OCI-LY7 (cell line): ENCODE measurements at regions of chr9 and their contacts with region 1.

Region 1: DNA sequence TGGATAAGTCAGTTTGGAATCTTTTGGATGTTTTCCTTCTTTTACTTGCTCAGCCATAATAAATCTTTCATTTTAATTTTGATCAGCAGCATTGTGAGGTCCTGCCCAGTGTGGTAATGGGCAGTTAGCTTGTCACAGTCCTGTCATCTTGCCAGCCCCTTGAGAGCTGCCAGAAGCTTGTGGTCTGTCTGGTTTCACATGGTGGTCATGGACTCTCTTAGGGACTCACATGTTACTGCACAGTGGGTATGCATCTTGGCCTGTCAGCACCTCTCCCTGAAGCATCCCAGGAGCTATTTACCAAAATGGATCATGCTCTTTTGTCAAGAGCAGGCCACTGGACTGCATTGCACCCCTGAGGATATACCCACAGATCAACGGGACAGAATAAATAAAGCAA is 60.3 kb downstream of the DAPK1 start:
- DNase-seq: no peak
- H3K4me3 ChIP-seq: no peak overlapping the region
- H3K27ac ChIP-seq: no peak overlapping the region
- H3K4me1 ChIP-seq: peaks cover 49% of the 10 kb centered on the region
- CTCF ChIP-seq: no peak

Region 2: GRCh38 chr9:87479801-87480201 is 78.2 kb before region 1 on chr9:
- CTCF ChIA-PET with region 1: no interaction called
- POLR2A ChIA-PET with region 1: interaction called, 8 read pairs
- intact Hi-C with region 1: loop called (anchors 5 kb)
- DNase-seq: peak; percentile 77
- H3K4me3 ChIP-seq: no peak overlapping the region
- H3K27ac ChIP-seq: peak overlapping the region; percentile 54
- H3K4me1 ChIP-seq: peaks cover 11% of the 10 kb centered on the region
- CTCF ChIP-seq: no peak

Region 3: GRCh38 chr9:87569518-87569917 is 11.5 kb after region 1 on chr9:
- CTCF ChIA-PET with region 1: interaction called, 3 read pairs
- POLR2A ChIA-PET with region 1: interaction called, 35 read pairs
- intact Hi-C with region 1: no loop called
- DNase-seq: peak; percentile 26
- H3K4me3 ChIP-seq: no peak overlapping the region
- H3K27ac ChIP-seq: no peak overlapping the region
- H3K4me1 ChIP-seq: peaks cover 24% of the 10 kb centered on the region
- CTCF ChIP-seq: no peak

Region 4: GRCh38 chr9:87640385-87640795 is 82.4 kb after region 1 on chr9:
- CTCF ChIA-PET with region 1: no interaction called
- POLR2A ChIA-PET with region 1: interaction called, 3 read pairs
- intact Hi-C with region 1: loop called (anchors 5 kb)
- DNase-seq: no peak
- H3K4me3 ChIP-seq: no peak overlapping the region
- H3K27ac ChIP-seq: no peak overlapping the region
- H3K4me1 ChIP-seq: peaks cover 8% of the 10 kb centered on the region
- CTCF ChIP-seq: no peak